CD8-positive, alpha-beta T cell (primary cell): ENCODE measurements at regions of chr3 and their contacts with region 1.

Region 1: GRCh38 chr3:16504242-16504641 is 9.3 kb downstream of the RFTN1 start:
- DNase-seq: no peak
- ATAC-seq: no peak
- H3K4me3 ChIP-seq: no peak overlapping the region
- H3K4me3 Mint-ChIP-seq: no peak overlapping the region
- H3K27ac ChIP-seq: no peak overlapping the region
- H3K27ac Mint-ChIP-seq: no peak overlapping the region
- H3K4me1 ChIP-seq: peaks cover 30% of the 10 kb centered on the region
- H3K4me1 Mint-ChIP-seq: peaks cover 78% of the 10 kb centered on the region
- H3K27me3 ChIP-seq: no peaks in the 10 kb centered on the region
- H3K27me3 Mint-ChIP-seq: no peaks in the 10 kb centered on the region
- CTCF ChIP-seq: no peak

Region 2: GRCh38 chr3:14857506-14857905 is 1646.7 kb before region 1 on chr3:
- CTCF ChIA-PET with region 1: no interaction called
- POLR2A ChIA-PET with region 1: no interaction called
- intact Hi-C with region 1: no loop called
- DNase-seq: no peak
- ATAC-seq: no peak
- H3K4me3 ChIP-seq: no peak overlapping the region
- H3K4me3 Mint-ChIP-seq: no peak overlapping the region
- H3K27ac ChIP-seq: no peak overlapping the region
- H3K27ac Mint-ChIP-seq: no peak overlapping the region
- H3K4me1 ChIP-seq: no peaks in the 10 kb centered on the region
- H3K4me1 Mint-ChIP-seq: no peaks in the 10 kb centered on the region
- H3K27me3 ChIP-seq: peaks cover 0 to 4% of the 10 kb centered on the region in 2 experiments
- H3K27me3 Mint-ChIP-seq: peaks cover 13% of the 10 kb centered on the region
- CTCF ChIP-seq: no peak

Region 3: GRCh38 chr3:16326724-16327349 is 177.4 kb before region 1 on chr3:
- CTCF ChIA-PET with region 1: no interaction called
- POLR2A ChIA-PET with region 1: no interaction called
- intact Hi-C with region 1: no loop called
- DNase-seq: peak in 1 of 9 experiments; percentile 46
- ATAC-seq: no peak
- H3K4me3 ChIP-seq: no peak overlapping the region
- H3K4me3 Mint-ChIP-seq: no peak overlapping the region
- H3K27ac ChIP-seq: peak overlapping the region in 1 of 2 experiments; percentile 10
- H3K27ac Mint-ChIP-seq: peak overlapping the region; percentile 72
- H3K4me1 ChIP-seq: peaks cover 12% of the 10 kb centered on the region
- H3K4me1 Mint-ChIP-seq: peaks cover 31% of the 10 kb centered on the region
- H3K27me3 ChIP-seq: no peaks in the 10 kb centered on the region
- H3K27me3 Mint-ChIP-seq: no peaks in the 10 kb centered on the region
- CTCF ChIP-seq: no peak

Region 4: GRCh38 chr3:16516695-16517481 is 12.6 kb after region 1 on chr3:
- CTCF ChIA-PET with region 1: interaction called, 10 read pairs
- POLR2A ChIA-PET with region 1: interaction called, 3 read pairs
- intact Hi-C with region 1: no loop called
- DNase-seq: peak in 2 of 9 experiments; percentile 41 to 60
- ATAC-seq: no peak
- H3K4me3 ChIP-seq: no peak overlapping the region
- H3K4me3 Mint-ChIP-seq: peak overlapping the region; percentile 96
- H3K27ac ChIP-seq: peak overlapping the region in 1 of 2 experiments; percentile 74
- H3K27ac Mint-ChIP-seq: peak overlapping the region; percentile 16
- H3K4me1 ChIP-seq: peaks cover 42% of the 10 kb centered on the region
- H3K4me1 Mint-ChIP-seq: peaks cover 55% of the 10 kb centered on the region
- H3K27me3 ChIP-seq: no peaks in the 10 kb centered on the region
- H3K27me3 Mint-ChIP-seq: no peaks in the 10 kb centered on the region
- CTCF ChIP-seq: no peak